ENCODE measurements at regions of chr14 and their contacts with region 1.

Region 1: GRCh38 chr14:22448905-22449599 is 140.0 kb downstream of the DAD1 start:
- DNase-seq: no peak
- ATAC-seq: peak; percentile 74
- H3K4me3 ChIP-seq: no peak overlapping the region
- H3K27ac ChIP-seq: peak overlapping the region; percentile 83
- H3K4me1 ChIP-seq: peaks cover 25% of the 10 kb centered on the region
- H3K27me3 ChIP-seq: no peaks in the 10 kb centered on the region
- CTCF ChIP-seq: no peak
- EP300 ChIP-seq: 0 out of 4 replicates have a peak, but pooled peaks of 1 of the 2 experiments have one; percentile 21
- POLR2A ChIP-seq: no peak
- RAD21 ChIP-seq: no peak

Region 2: DNA sequence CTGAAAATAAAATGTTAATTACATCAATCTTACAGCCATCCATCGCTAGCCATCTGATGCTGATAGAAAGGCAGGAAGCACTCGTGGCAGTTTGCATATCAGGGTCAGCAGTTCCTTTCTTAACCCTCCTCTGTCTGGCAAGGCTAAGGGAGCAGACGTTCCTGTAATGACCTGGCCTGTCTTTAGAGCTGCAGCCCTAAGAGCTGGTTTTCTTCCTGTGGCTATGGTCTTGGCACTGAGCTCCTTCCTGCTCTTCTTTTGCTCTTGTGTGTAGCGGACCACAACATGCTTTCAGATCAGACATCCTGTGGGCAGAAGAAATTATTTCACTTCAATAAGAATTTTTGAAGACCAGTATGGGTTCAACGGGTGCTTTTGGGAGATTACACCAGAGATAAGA is 30.4 kb before region 1 on chr14:
- CTCF ChIA-PET with region 1: interaction called, 10 read pairs
- POLR2A ChIA-PET with region 1: interaction called, 5 read pairs
- RAD21 ChIA-PET with region 1: interaction called, 6 read pairs
- SMC1A ChIA-PET with region 1: interaction called, 10 read pairs
- in situ Hi-C with region 1: no loop called
- intact Hi-C with region 1: loop called (anchors 1 kb)
- DNase-seq: peak; percentile 48
- ATAC-seq: peak; percentile 88
- H3K4me3 ChIP-seq: no peak overlapping the region
- H3K27ac ChIP-seq: no peak overlapping the region; the same call in 1 of the 2 replicates
- H3K4me1 ChIP-seq: peaks cover 13% of the 10 kb centered on the region
- H3K27me3 ChIP-seq: no peaks in the 10 kb centered on the region
- CTCF ChIP-seq: no peak
- EP300 ChIP-seq: no peak
- POLR2A ChIP-seq: no peak
- RAD21 ChIP-seq: no peak

Region 3: DNA sequence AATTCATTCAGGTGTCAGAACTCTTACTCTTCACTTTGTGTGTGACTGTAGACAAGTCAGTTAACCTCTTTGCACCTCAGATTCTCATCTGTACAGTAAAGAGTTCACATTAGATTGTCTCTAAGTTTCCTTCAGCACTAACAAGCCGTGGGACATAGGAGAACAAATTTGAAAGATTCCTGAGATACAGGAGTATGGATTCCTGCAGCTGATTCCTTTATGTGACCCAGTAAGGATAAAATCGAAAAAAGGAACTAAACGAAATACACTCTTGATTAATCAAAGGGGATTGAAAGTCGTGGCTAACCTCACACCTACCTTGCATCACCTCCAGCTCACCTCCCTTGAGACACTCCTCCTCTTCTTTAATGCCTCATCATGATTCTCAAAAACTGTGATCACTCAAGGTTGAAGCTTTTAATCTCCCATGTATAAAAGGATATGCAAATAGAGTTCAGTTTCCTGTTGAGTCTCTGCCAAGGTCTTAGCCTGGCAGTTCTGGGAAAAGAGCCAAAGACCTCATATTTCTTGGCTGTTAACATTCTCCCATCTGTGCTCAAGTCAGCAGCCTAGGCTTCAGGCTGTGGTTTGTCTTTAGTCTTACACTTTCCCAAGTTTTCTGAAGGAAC is 16.6 kb before region 1 on chr14:
- CTCF ChIA-PET with region 1: interaction called, 45 read pairs
- POLR2A ChIA-PET with region 1: no interaction called
- RAD21 ChIA-PET with region 1: interaction called, 18 read pairs
- SMC1A ChIA-PET with region 1: interaction called, 43 read pairs
- in situ Hi-C with region 1: no loop called
- intact Hi-C with region 1: no loop called
- DNase-seq: no peak
- ATAC-seq: peak; percentile 83
- H3K4me3 ChIP-seq: no peak overlapping the region
- H3K27ac ChIP-seq: no peak overlapping the region
- H3K4me1 ChIP-seq: peaks cover 19% of the 10 kb centered on the region
- H3K27me3 ChIP-seq: no peaks in the 10 kb centered on the region
- CTCF ChIP-seq: no peak
- EP300 ChIP-seq: no peak
- POLR2A ChIP-seq: no peak
- RAD21 ChIP-seq: no peak

Region 4: DNA sequence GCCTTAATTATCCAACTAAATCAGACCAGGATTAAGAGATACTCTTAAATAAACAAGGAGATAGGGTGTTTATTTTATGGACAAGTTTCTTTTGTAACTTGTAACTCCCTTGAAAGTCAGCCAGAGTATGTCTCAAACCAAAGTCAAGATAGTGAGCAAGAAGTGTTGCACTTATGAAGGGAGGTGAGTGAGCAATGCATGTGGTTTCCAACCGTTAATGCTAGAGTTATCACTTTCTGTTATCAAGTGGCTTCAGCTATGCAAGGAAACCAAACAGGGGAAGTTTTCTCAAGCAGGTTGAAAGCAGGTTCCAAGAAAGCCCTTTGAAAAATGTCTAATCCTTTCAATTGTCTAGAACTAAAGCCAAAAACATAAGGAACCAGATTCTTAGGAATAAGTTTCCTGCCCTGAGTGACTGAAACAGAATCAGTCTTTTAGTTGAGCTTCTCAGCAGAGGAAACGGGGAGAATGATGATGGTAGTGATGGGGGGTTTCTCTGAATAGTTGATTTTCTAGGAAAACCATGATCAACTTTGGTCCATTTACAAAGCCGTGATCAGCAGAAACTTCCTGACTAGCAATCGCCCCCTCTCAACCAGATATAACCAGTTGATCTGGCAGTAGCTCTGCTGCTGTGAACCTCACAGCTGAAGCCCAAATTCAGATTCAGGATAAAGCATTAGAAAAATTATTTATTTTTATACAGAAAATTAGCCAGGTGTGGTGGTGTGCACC is 11.6 kb after region 1 on chr14:
- CTCF ChIA-PET with region 1: interaction called, 35 read pairs
- POLR2A ChIA-PET with region 1: interaction called, 26 read pairs
- RAD21 ChIA-PET with region 1: interaction called, 37 read pairs
- SMC1A ChIA-PET with region 1: interaction called, 152 read pairs
- in situ Hi-C with region 1: no loop called
- intact Hi-C with region 1: loop called (anchors 1 kb)
- DNase-seq: no peak
- ATAC-seq: peak; percentile 55
- H3K4me3 ChIP-seq: no peak overlapping the region
- H3K27ac ChIP-seq: peak overlapping the region; percentile 69
- H3K4me1 ChIP-seq: peaks cover 61% of the 10 kb centered on the region
- H3K27me3 ChIP-seq: no peaks in the 10 kb centered on the region
- CTCF ChIP-seq: no peak
- EP300 ChIP-seq: peak; percentile 67 to 69
- POLR2A ChIP-seq: no peak
- RAD21 ChIP-seq: no peak